ENCODE measurements at regions of chr16 and their contacts with region 1.

Region 1: GRCh38 chr16:11255737-11256660 is at the start of gene SOCS1:
- DNase-seq: peak; percentile 59 to 95
- H3K4me3 ChIP-seq: peak within 1 kb of the TSS; percentile 61 to 97 (median 74)
- H3K27ac ChIP-seq: no peak within 1 kb of the TSS
- H3K4me1 ChIP-seq: peaks cover 0 to 23% (median 8%) of the 10 kb centered on the region in 4 experiments; a peak in 5 of 7 replicates
- H3K27me3 ChIP-seq: no peaks in the 10 kb centered on the region; a peak in 1 of 7 replicates
- CTCF ChIP-seq: peak; percentile 74 to 81 (median 75)
- EP300 ChIP-seq: 0 out of 3 replicates have a peak, but pooled peaks of 1 of the 2 experiments have one; percentile 36
- POLR2A ChIP-seq: peak; percentile 94 to 97
- RAD21 ChIP-seq: peak; percentile 62 to 73
- total RNA-seq, gene SOCS1: 48.9 and 49.8 TPM in 2 replicates

Region 2: DNA sequence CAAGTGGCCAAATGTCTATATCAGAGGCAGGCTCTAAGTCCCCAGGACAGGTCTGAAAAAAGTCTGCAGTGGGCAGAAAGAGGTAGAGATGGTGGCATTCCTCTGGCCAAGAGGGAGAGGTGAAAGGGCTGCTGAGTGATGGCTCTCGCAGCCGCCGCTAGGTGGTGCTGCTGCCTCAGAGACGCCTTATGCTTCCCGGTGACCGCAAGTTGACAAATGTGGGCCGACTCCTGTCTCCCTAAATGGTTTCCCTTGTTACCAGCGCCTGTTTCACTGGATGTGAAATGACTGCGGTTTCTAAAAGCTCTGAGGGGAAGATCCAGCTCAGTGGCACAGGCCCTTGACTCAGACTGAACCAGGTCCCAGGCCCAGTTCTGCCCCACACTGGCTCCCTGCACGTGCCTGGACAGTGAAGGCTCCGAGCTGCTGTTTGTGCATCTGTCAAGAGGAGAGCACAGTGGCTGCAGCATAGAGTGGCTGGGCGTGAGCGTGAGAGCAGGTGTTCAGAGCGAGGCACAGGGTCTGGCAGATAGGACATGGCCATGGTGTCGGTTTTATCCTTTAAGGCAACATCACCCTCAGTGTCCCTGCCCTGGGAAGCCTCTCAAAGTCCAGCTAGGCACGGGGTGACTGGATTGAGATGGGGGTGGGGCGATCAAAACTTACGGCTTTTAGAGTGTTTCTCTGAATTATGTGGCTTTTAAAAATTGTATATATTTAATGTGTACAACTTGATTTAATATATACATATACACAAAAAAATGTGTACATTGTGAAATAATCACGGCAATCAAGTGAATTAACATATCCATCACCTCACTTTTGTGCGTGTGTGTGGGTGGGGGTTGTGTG is 291.7 kb before region 1 on chr16:
- CTCF ChIA-PET with region 1: interaction called, 15 read pairs
- POLR2A ChIA-PET with region 1: interaction called, 4 read pairs
- DNase-seq: peak in 1 of 2 experiments; percentile 89
- H3K4me3 ChIP-seq: no peak overlapping the region
- H3K27ac ChIP-seq: no peak overlapping the region
- H3K4me1 ChIP-seq: peaks cover 0 to 4% (median 2%) of the 10 kb centered on the region in 4 experiments; a peak in 4 of 7 replicates
- H3K27me3 ChIP-seq: no peaks in the 10 kb centered on the region
- CTCF ChIP-seq: peak; percentile 86 to 98 (median 98)
- EP300 ChIP-seq: no peak
- POLR2A ChIP-seq: no peak
- RAD21 ChIP-seq: peak; percentile 92 to 94

Region 3: GRCh38 chr16:11201498-11202259 is 54.3 kb before region 1 on chr16:
- CTCF ChIA-PET with region 1: interaction called, 14 read pairs
- POLR2A ChIA-PET with region 1: interaction called, 20 read pairs
- DNase-seq: peak in 1 of 2 experiments; percentile 65
- H3K4me3 ChIP-seq: peak overlapping the region in 1 of 4 experiments; percentile 14; a peak in 3 of 8 replicates
- H3K27ac ChIP-seq: no peak overlapping the region
- H3K4me1 ChIP-seq: peaks cover 7 to 30% (median 20%) of the 10 kb centered on the region in 4 experiments
- H3K27me3 ChIP-seq: no peaks in the 10 kb centered on the region; a peak in 1 of 7 replicates
- CTCF ChIP-seq: no peak
- EP300 ChIP-seq: no peak; a peak in 1 of 3 replicates
- POLR2A ChIP-seq: no peak
- RAD21 ChIP-seq: 0 out of 4 replicates have a peak, but pooled peaks of 1 of the 2 experiments have one; percentile 3

Region 4: GRCh38 chr16:11245988-11246387 is 10.0 kb before region 1 on chr16:
- CTCF ChIA-PET with region 1: interaction called, 5 read pairs
- POLR2A ChIA-PET with region 1: interaction called, 21 read pairs
- DNase-seq: no peak
- H3K4me3 ChIP-seq: no peak overlapping the region
- H3K27ac ChIP-seq: no peak overlapping the region
- H3K4me1 ChIP-seq: peaks cover 0 to 6% (median under 1%) of the 10 kb centered on the region in 4 experiments; a peak in 3 of 7 replicates
- H3K27me3 ChIP-seq: no peaks in the 10 kb centered on the region
- CTCF ChIP-seq: no peak
- EP300 ChIP-seq: no peak
- POLR2A ChIP-seq: no peak
- RAD21 ChIP-seq: no peak

Region 5: GRCh38 chr16:11297492-11298142 is 41.6 kb after region 1 on chr16:
- CTCF ChIA-PET with region 1: interaction called, 13 read pairs
- POLR2A ChIA-PET with region 1: interaction called, 12 read pairs
- DNase-seq: peak in 1 of 2 experiments; percentile 66
- H3K4me3 ChIP-seq: no peak overlapping the region
- H3K27ac ChIP-seq: no peak overlapping the region
- H3K4me1 ChIP-seq: peaks cover 5 to 9% (median 9%) of the 10 kb centered on the region in 4 experiments
- H3K27me3 ChIP-seq: no peaks in the 10 kb centered on the region
- CTCF ChIP-seq: no peak
- EP300 ChIP-seq: no peak
- POLR2A ChIP-seq: no peak
- RAD21 ChIP-seq: no peak

Region 6: DNA sequence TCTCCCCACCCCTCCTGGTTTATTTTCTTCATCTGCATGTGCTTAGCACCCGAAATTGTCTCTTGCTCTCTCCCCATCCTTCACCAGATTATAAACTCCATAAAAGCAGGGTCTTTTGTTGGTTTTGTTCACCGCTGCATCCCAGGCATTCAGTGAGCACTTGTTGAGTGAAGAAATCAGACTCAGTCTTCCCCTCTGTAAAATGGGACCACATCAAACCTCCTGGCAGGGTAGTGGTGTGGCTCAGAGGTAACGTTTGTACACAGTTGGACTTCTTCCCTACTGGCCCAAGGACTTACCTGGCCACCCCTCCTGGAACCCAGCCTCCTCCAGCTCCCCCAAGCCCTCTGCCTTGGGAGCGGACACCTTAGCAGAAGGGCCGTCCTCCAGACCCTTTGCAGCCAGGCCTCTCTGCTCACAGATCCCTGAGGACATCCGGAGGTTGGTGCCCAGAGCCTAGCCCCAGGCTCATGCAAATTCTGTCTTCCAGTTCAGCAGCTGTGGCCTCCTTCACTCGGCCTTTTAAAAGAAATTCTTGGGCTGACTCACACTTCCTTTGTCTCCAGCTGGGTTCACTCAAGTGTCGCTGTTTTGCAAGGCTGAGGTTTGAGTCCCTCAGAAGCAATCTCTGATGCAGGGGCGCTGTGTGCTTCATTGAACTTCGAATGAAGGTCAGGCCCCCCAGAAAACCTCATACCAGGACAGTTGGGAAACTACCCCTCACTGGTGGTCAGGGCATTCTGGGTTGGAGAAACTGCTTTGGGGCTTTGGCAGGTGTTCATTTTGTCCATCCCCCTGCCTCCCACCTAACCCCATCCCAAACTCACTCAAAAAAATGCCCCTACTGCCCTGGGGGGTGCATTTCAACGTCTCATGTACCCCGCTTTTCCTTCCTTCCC is 72.4 kb after region 1 on chr16:
- CTCF ChIA-PET with region 1: interaction called, 12 read pairs
- POLR2A ChIA-PET with region 1: interaction called, 32 read pairs
- DNase-seq: peak; percentile 78 to 94
- H3K4me3 ChIP-seq: peak overlapping the region in 3 of 4 experiments; percentile 5 to 50 (median 23); a peak in 4 of 8 replicates
- H3K27ac ChIP-seq: peak overlapping the region; percentile 94
- H3K4me1 ChIP-seq: peaks cover 13 to 16% (median 13%) of the 10 kb centered on the region in 4 experiments; a peak in 6 of 7 replicates
- H3K27me3 ChIP-seq: no peaks in the 10 kb centered on the region
- CTCF ChIP-seq: no peak
- EP300 ChIP-seq: peak in 1 of 2 experiments; percentile 8; a peak in 1 of 3 replicates
- POLR2A ChIP-seq: no peak
- RAD21 ChIP-seq: peak in 1 of 2 experiments; percentile 15; a peak in 1 of 4 replicates

Region 7: DNA sequence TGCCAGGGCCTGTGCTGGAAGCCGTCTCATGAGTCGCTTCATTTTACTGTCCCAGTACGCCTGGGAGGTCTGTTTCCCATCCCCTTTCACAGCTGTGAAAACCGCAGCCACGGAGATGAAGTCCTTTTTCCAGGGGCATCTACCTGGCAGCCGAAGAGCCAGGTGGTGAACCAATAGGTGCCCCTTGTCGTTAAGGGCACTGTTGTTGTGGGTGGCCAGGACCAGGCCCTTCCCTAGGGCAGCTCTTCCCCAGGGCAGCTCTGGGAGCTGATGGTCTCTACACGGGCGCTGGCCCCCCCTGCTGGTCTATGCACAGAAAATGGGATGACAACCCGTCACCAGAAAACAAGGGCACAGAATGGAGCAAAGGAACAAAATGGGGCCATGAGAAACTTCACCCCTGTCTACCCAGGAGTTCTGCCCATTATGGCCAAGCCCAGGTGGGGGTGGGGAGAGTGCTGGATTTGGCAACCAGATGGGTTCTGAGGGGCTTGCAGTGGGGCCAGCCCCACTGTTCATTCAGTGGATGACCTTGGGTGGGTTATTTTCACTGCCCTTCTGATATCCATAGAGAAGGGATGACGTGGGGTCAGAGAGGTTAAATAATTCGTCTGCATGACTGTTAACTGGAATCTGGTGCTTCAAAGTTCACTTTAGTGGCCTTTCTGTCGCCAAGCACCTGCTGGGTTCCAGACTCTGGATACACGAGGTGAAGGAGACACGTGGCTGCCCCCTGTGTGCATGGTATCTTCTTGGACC is 100.8 kb after region 1 on chr16:
- CTCF ChIA-PET with region 1: interaction called, 56 read pairs
- POLR2A ChIA-PET with region 1: interaction called, 27 read pairs
- DNase-seq: peak; percentile 36 to 85
- H3K4me3 ChIP-seq: no peak overlapping the region
- H3K27ac ChIP-seq: no peak overlapping the region
- H3K4me1 ChIP-seq: peaks cover 0 to 2% (median 0%) of the 10 kb centered on the region in 4 experiments; a peak in 3 of 7 replicates
- H3K27me3 ChIP-seq: no peaks in the 10 kb centered on the region
- CTCF ChIP-seq: peak; percentile 70 to 82 (median 79)
- EP300 ChIP-seq: no peak
- POLR2A ChIP-seq: no peak
- RAD21 ChIP-seq: peak; percentile 90 to 94

Measured in H1 (cell line).